Activated T-helper 1 cell treated with anti-CD3 and anti-CD28 coated beads, Interleukin-12 subunit alpha, Interleukin-12 subunit beta, Interleukin-2, Interleukin-4 antibody, amounts not matched to agents 30 ng/mL and 10 ng/mL and 1 ng/mL, durations not matched to agents 14 hours and 24 hours and 36 hours (primary cell): ENCODE measurements at regions of chr4 and their contacts with region 1.

Region 1: DNA sequence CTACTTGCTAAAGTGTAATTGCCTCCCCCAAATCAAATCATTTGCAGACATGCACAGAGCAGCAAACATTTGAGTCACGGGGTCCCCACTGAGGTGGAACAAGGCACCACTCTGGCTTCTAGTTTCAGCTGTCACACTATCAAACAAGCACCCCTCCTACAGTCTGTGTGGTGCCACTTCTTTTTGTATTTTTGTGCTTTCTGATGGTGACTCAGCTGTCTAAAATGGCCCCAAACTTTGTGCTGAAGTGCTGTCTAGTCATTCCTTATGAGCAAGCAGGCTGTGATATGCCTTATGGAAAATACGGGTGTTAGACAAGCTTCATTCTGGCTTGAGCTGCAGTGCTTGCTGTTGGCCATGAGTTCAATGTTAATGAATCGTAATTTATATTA is 15.4 kb downstream of the IGFBP7 start:
- DNase-seq: no peak
- H3K4me3 Mint-ChIP-seq: no peak overlapping the region
- H3K27ac Mint-ChIP-seq: no peak overlapping the region
- H3K4me1 Mint-ChIP-seq: no peaks in the 10 kb centered on the region
- H3K27me3 Mint-ChIP-seq: peaks cover 13% of the 10 kb centered on the region

Region 2: DNA sequence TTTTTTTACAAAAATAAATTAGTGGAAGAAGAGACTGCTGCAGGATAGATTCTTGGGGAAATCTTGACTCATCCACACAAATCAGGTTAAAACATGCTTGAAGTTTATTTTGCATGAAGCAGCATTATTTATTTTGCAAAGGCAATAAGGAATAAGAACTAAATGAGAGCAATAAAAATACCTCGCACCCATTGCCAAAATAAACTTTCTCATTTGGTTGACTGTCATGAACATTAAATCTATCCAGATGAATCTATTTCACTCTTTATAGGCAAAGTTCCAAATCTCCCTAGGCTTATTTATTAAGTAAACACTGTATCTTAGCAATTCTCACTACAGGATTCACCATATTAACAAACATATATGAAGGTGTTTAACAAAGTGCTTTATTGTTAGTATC is 472.7 kb before region 1 on chr4:
- intact Hi-C with region 1: loop called (anchors 5 kb)
- DNase-seq: no peak
- H3K4me3 Mint-ChIP-seq: no peak overlapping the region
- H3K27ac Mint-ChIP-seq: no peak overlapping the region
- H3K4me1 Mint-ChIP-seq: peaks cover 16% of the 10 kb centered on the region
- H3K27me3 Mint-ChIP-seq: no peaks in the 10 kb centered on the region

Region 3: DNA sequence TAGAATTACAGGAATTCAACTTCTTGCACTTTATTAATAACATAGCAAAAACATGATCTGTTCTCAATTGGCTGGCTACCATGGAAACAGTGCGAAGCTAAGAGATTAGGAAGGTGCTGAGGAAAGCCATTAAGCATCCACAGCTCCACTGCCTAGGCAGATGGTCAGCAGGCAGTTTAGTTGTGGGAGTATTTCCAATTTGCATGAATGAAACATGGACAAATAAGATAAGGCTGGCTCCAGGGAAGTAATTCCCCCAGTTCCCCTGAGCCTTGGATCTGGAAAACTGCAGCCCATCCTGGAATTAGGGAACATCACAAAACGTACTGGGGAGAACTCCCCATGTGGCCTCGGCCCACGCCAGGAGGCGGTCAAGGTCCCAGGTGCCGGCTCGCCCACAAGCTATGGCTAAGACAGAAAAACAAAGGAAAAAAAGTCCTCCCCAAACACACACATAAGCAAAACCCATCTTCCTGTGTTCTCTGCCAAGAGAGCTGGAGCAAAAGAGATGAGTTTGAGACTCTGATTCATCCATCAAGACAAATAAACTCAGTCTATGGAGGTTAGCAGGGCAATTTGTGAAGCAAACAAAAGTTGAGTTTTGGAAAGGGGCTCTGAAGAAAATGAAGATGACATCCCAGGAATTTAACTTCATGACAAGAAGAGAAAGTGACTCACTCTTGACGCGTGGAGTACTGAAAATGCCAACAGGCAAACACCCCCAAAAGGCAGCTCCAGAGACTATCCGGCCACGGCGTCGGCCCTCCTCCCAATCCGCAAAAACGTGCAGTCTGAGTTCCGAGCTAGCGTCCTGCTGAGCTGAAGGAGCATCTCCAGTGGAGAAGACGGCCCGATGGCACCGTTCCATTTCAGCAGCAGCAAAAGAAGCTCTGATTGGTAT is 29.8 kb before region 1 on chr4:
- intact Hi-C with region 1: no loop called
- DNase-seq: no peak
- H3K4me3 Mint-ChIP-seq: no peak overlapping the region
- H3K27ac Mint-ChIP-seq: no peak overlapping the region
- H3K4me1 Mint-ChIP-seq: no peaks in the 10 kb centered on the region
- H3K27me3 Mint-ChIP-seq: peaks cover 1% of the 10 kb centered on the region